ENCODE measurements at regions of chr16 and their contacts with region 1.

Region 1: GRCh38 chr16:31382485-31383161 is 10.5 kb upstream of the ITGAD start:
- DNase-seq: peak; percentile 69 to 84 (median 81)
- H3K4me3 ChIP-seq: no peak overlapping the region
- H3K27ac ChIP-seq: no peak overlapping the region
- H3K4me1 ChIP-seq: peaks cover 0 to 10% (median 0%) of the 10 kb centered on the region in 4 experiments
- H3K27me3 ChIP-seq: no peaks in the 10 kb centered on the region

Region 2: DNA sequence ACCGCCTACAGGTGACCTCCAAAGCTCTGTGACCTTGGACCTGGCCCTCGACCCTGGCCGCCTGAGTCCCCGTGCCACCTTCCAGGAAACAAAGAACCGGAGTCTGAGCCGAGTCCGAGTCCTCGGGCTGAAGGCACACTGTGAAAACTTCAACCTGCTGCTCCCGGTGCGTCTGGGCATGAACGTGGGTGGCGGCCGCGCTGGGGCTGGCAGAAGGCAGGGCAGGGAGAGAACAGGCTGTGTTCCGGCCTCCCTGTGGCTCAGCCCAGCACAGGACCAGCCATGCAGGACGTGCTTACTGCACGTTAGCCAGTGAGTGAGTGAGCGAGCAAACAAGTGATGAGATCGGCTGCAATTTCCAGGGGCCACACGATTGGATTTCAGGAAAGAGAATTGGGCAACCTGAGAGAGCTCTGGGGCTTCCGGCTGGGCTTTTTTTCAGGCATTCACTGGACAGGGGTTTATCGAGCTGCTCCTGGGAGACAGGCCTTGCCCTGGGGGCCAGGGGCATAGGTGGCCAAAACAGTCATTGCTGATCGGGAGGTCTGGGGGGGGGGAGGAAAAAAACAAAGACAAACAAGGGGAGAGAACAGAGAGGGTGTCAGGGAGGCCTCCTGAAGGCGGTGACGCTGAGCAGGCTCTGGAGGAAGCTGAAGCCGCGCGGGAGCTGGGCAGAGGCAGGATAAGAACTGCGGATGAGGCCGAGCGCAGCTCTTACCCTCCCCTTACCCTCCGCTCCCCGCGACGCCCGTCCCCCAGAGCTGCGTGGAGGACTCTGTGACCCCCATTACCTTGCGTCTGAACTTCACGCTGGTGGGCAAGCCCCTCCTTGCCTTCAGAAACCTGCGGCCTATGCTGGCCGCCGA is 10.8 kb before region 1 on chr16:
- CTCF ChIA-PET with region 1: interaction called, 33 read pairs
- POLR2A ChIA-PET with region 1: no interaction called
- DNase-seq: no peak
- H3K4me3 ChIP-seq: no peak overlapping the region
- H3K27ac ChIP-seq: no peak overlapping the region
- H3K4me1 ChIP-seq: peaks cover 6 to 14% (median 12%) of the 10 kb centered on the region in 4 experiments
- H3K27me3 ChIP-seq: no peaks in the 10 kb centered on the region

Measured in common myeloid progenitor, CD34-positive (primary cell).